GM12878 (cell line): ENCODE measurements at regions of chr6 and their contacts with region 1.

Region 1: DNA sequence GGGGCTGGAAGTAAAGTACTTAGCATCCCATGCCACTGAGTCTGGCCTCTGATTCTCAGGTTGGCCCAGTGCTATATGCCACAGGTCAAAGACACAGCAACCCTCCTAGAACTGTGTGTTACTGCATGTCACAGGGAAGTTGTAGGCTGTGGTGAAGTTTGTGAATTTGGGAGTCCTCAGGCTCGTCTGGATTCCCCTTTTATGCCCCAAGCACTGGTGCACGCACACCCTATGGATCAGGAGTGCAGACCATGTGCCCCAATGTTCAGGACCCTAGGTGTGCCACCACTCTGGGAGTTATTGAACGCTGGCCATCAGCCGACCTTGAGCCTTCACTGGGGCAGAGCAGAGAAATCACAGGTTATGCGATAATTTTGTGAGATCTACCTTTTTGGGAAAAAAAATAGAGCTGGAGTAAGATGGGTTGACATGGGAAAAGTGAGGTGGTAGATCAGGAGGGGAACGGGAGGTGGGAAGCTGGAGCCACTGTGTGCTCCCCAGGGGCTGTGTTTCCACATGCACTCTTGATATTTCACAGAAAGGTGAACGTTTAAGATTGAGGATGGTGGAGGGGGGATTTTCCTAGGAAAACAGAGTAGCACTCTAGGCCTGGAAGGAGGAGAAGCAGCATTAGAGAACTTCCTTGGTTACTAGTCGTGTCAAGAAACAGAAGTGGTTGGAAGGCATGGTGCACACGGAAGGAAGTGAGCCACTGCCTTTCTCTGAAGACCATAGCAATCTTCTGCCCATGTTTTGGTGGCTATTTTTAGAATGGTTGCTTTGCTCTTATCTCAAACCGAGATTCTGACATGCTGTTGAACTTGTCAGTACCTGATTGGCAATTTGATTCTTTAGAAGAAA is 44.1 kb downstream of the DUSP22 start:
- DNase-seq: peak; percentile 88
- ATAC-seq: peak; percentile 12
- H3K4me3 ChIP-seq: peak overlapping the region; percentile 11; the same call in 1 of the 2 replicates
- H3K27ac ChIP-seq: peak overlapping the region; percentile 86
- H3K4me1 ChIP-seq: peaks cover 86% of the 10 kb centered on the region
- H3K27me3 ChIP-seq: no peaks in the 10 kb centered on the region
- CTCF ChIP-seq: no peak
- EP300 ChIP-seq: 0 out of 4 replicates have a peak, but pooled peaks of 1 of the 2 experiments have one; percentile 30
- POLR2A ChIP-seq: no peak
- RAD21 ChIP-seq: 0 out of 2 replicates have a peak, but pooled peaks have one; percentile 21

Region 2: GRCh38 chr6:286681-287488 is 49.5 kb before region 1 on chr6:
- CTCF ChIA-PET with region 1: interaction called, 5 read pairs
- POLR2A ChIA-PET with region 1: interaction called, 7 read pairs
- RAD21 ChIA-PET with region 1: interaction called, 17 read pairs
- SMC1A ChIA-PET with region 1: interaction called, 23 read pairs
- in situ Hi-C with region 1: no loop called
- intact Hi-C with region 1: loop called (anchors 1 kb)
- DNase-seq: no peak
- ATAC-seq: peak; percentile 48
- H3K4me3 ChIP-seq: peak overlapping the region; percentile 2; the same call in 1 of the 2 replicates
- H3K27ac ChIP-seq: peak overlapping the region; percentile 53
- H3K4me1 ChIP-seq: peaks cover 54% of the 10 kb centered on the region
- H3K27me3 ChIP-seq: no peaks in the 10 kb centered on the region
- CTCF ChIP-seq: no peak
- EP300 ChIP-seq: 0 out of 4 replicates have a peak, but pooled peaks have one; percentile 42 to 61
- POLR2A ChIP-seq: no peak
- RAD21 ChIP-seq: 0 out of 2 replicates have a peak, but pooled peaks have one; percentile 7

Region 3: DNA sequence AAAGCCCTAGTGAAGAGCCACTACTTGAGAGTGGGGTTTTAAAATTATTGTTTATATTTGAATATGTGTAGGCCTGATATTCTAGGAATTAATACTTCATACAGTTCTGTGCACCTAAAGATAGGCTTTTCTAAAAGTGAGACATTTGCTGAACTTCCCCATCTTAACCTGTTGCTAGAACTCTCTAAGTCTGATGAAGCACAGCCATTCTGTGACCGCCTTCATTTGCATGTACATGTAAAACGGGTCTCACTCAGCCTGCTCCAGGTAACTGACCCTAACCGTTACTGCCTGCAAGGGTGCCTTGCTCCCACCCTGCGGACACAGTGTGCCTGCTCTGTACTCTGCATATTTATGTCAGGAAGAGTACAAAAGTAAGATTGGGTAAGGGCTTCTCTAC is 10.8 kb after region 1 on chr6:
- CTCF ChIA-PET with region 1: interaction called, 34 read pairs
- POLR2A ChIA-PET with region 1: interaction called, 81 read pairs
- RAD21 ChIA-PET with region 1: interaction called, 142 read pairs
- SMC1A ChIA-PET with region 1: interaction called, 168 read pairs
- in situ Hi-C with region 1: no loop called
- intact Hi-C with region 1: loop called (anchors 1 kb)
- DNase-seq: no peak
- ATAC-seq: peak; percentile 68
- H3K4me3 ChIP-seq: peak overlapping the region; percentile 24; the same call in 1 of the 2 replicates
- H3K27ac ChIP-seq: peak overlapping the region; percentile 84
- H3K4me1 ChIP-seq: peaks cover 64% of the 10 kb centered on the region
- H3K27me3 ChIP-seq: no peaks in the 10 kb centered on the region
- CTCF ChIP-seq: peak in 1 of 3 experiments; percentile 9; a peak in 1 of 6 replicates
- EP300 ChIP-seq: no peak; a peak in 1 of 4 replicates
- POLR2A ChIP-seq: no peak
- RAD21 ChIP-seq: peak; percentile 58

Region 4: DNA sequence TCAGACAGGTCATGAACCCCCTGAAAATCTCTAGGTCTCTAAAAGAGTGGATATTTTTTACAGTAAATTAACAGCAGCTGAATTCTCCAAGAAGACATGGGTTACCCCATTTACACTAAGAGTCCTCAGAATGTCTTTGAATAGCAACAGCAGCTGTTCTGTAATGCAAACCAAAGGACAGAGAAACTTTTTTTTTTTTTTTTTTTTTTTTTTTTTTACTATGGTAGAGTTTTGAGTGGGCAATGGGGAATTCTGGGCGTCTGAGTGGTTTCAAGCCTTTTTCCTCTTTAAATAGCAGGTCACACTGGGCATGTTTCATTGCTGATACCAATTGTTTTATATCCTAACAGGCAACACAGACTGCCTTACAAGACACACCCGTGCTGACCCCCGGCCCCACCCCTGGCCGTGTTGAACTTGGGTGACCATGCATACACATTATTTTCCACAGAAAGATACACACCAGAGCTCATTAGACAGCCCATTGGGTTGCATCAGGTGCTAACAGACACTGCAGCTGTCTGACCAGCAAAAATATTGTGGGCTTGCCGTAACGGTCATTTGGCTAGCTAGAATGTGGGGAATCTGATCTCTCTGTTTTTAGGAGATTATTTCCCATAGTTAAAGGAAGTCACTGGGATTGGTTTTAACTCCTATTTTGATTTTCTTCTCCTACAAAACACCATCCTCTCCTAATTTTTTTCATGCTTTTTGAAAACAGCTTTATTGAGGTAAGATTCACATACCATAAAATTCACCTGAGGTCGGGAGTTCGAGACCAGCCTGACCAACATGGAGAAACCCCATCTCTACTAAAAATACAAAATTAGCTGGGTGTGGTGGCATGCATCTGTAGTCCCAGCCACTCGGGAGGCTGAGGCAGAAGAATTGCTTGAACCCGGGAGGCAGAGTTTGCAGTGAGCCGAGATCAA is 28.5 kb after region 1 on chr6:
- CTCF ChIA-PET with region 1: interaction called, 23 read pairs
- POLR2A ChIA-PET with region 1: interaction called, 10 read pairs
- RAD21 ChIA-PET with region 1: interaction called, 73 read pairs
- SMC1A ChIA-PET with region 1: interaction called, 230 read pairs
- in situ Hi-C with region 1: no loop called
- intact Hi-C with region 1: no loop called
- DNase-seq: peak; percentile 78
- ATAC-seq: peak; percentile 94
- H3K4me3 ChIP-seq: no peak overlapping the region
- H3K27ac ChIP-seq: peak overlapping the region; percentile 33
- H3K4me1 ChIP-seq: peaks cover 25% of the 10 kb centered on the region
- H3K27me3 ChIP-seq: no peaks in the 10 kb centered on the region
- CTCF ChIP-seq: no peak
- EP300 ChIP-seq: peak; percentile 37 to 88; a peak in 2 of 4 replicates
- POLR2A ChIP-seq: no peak
- RAD21 ChIP-seq: 0 out of 2 replicates have a peak, but pooled peaks have one; percentile 2

Region 5: GRCh38 chr6:391559-392440 is 55.4 kb after region 1 on chr6 and contains the start of gene IRF4:
- CTCF ChIA-PET with region 1: interaction called, 13 read pairs
- POLR2A ChIA-PET with region 1: interaction called, 11 read pairs
- RAD21 ChIA-PET with region 1: interaction called, 95 read pairs
- SMC1A ChIA-PET with region 1: interaction called, 116 read pairs
- in situ Hi-C with region 1: no loop called
- intact Hi-C with region 1: loop called (anchors 1 kb)
- DNase-seq: no peak
- ATAC-seq: peak; percentile 63
- H3K4me3 ChIP-seq: peak within 1 kb of the TSS; percentile 95
- H3K27ac ChIP-seq: peak within 1 kb of the TSS; percentile 97
- H3K4me1 ChIP-seq: peaks cover 33% of the 10 kb centered on the region
- H3K27me3 ChIP-seq: no peaks in the 10 kb centered on the region
- CTCF ChIP-seq: no peak
- EP300 ChIP-seq: no peak
- POLR2A ChIP-seq: peak; percentile 77
- RAD21 ChIP-seq: peak; percentile 25; the same call in 1 of the 2 replicates
- polyA plus RNA-seq, gene IRF4: 50.0 to 98.9 TPM